Activated CD8-positive, alpha-beta T cell treated with anti-CD3 and anti-CD28 coated beads for 36 hours (primary cell): ENCODE measurements at regions of chr12 and their contacts with region 1.

Region 1: GRCh38 chr12:118023301-118023860 is 6.9 kb downstream of the RFC5 start:
- DNase-seq: no peak
- ATAC-seq: no peak
- H3K4me3 Mint-ChIP-seq: no peak overlapping the region
- H3K27ac Mint-ChIP-seq: no peak overlapping the region
- H3K4me1 Mint-ChIP-seq: peaks cover 4% of the 10 kb centered on the region
- H3K27me3 Mint-ChIP-seq: no peaks in the 10 kb centered on the region
- CTCF ChIP-seq: no peak

Region 2: DNA sequence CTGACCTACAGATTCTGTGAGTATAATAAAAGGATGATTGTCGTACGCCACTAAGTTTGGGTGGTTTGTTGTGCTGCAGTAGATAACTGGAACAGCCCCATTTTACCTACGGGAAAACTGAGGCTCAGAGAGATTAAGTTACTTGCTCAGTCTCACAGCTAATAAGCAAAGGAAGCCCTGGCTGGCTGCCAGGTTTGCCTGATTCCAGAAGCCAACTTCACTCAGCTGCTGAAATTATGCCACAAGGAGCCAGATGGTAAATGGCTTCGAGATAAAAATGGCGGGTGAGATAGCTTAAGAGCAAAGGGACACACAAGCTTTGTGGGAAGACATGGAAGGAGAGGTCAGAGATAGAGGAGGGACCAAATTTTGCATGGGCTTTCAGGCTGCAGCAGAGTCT is 470.4 kb before region 1 on chr12:
- CTCF ChIA-PET with region 1: no interaction called
- POLR2A ChIA-PET with region 1: no interaction called
- intact Hi-C with region 1: no loop called
- DNase-seq: no peak
- ATAC-seq: no peak
- H3K4me3 Mint-ChIP-seq: no peak overlapping the region
- H3K27ac Mint-ChIP-seq: no peak overlapping the region
- H3K4me1 Mint-ChIP-seq: no peaks in the 10 kb centered on the region
- H3K27me3 Mint-ChIP-seq: peaks cover 1% of the 10 kb centered on the region
- CTCF ChIP-seq: no peak

Region 3: GRCh38 chr12:118035246-118036041 is 12.1 kb after region 1 on chr12:
- CTCF ChIA-PET with region 1: interaction called, 3 read pairs
- POLR2A ChIA-PET with region 1: interaction called, 10 read pairs
- intact Hi-C with region 1: no loop called
- DNase-seq: peak; percentile 47
- ATAC-seq: peak; percentile 83
- H3K4me3 Mint-ChIP-seq: no peak overlapping the region
- H3K27ac Mint-ChIP-seq: peak overlapping the region; percentile 91
- H3K4me1 Mint-ChIP-seq: peaks cover 49% of the 10 kb centered on the region
- H3K27me3 Mint-ChIP-seq: no peaks in the 10 kb centered on the region
- CTCF ChIP-seq: no peak